ENCODE measurements at regions of chr14 and their contacts with region 1.

Region 1: DNA sequence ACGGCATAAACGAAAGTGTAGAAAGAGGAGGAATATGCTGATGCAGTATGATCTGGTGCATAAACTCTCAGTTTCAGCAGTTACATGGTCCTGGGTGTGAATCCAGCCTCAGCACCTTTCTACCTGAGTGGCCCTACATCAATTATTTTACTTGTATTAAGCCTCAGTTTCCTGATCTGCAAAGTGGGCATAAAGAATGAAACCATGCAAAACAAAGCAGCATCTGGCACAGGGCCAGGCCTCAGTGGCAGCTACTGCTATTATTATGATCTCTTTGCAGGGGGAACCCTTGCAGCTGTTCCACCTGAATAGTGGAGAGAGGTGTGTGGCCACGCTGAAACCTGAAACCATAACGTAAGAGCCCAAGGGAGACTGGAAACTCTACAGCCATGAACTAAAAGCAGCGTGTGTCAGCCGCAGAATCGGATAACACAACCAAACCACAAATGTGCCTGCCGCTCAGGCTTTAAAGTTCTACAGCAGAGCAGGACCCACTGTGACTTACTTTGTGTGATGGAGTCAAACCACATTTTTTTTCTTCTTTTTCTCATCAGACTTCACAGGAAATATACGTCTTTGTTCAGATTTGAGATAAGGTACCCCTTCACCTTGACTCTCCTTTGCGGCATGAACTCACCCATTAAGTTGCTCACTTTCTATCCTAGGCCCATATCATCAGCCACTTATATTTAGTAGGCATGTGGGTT is 29.2 kb upstream of the FOS start:
- DNase-seq: peak; percentile 86
- H3K4me3 Mint-ChIP-seq: peak overlapping the region; percentile 48
- H3K27ac Mint-ChIP-seq: peak overlapping the region; percentile 85
- H3K4me1 Mint-ChIP-seq: peaks cover 54% of the 10 kb centered on the region
- H3K27me3 Mint-ChIP-seq: peaks cover 39% of the 10 kb centered on the region

Region 2: GRCh38 chr14:74754157-74754556 is 495.2 kb before region 1 on chr14:
- intact Hi-C with region 1: no loop called
- DNase-seq: no peak
- H3K4me3 Mint-ChIP-seq: no peak overlapping the region
- H3K27ac Mint-ChIP-seq: no peak overlapping the region
- H3K4me1 Mint-ChIP-seq: no peaks in the 10 kb centered on the region
- H3K27me3 Mint-ChIP-seq: no peaks in the 10 kb centered on the region

Region 3: GRCh38 chr14:75132382-75133086 is 116.9 kb before region 1 on chr14:
- intact Hi-C with region 1: loop called (anchors 1 kb)
- DNase-seq: peak; percentile 47
- H3K4me3 Mint-ChIP-seq: no peak overlapping the region
- H3K27ac Mint-ChIP-seq: peak overlapping the region; percentile 4
- H3K4me1 Mint-ChIP-seq: peaks cover 20% of the 10 kb centered on the region
- H3K27me3 Mint-ChIP-seq: no peaks in the 10 kb centered on the region

Region 4: GRCh38 chr14:75165586-75166391 is 83.6 kb before region 1 on chr14:
- intact Hi-C with region 1: no loop called
- DNase-seq: no peak
- H3K4me3 Mint-ChIP-seq: no peak overlapping the region
- H3K27ac Mint-ChIP-seq: no peak overlapping the region
- H3K4me1 Mint-ChIP-seq: peaks cover 21% of the 10 kb centered on the region
- H3K27me3 Mint-ChIP-seq: no peaks in the 10 kb centered on the region

Region 5: DNA sequence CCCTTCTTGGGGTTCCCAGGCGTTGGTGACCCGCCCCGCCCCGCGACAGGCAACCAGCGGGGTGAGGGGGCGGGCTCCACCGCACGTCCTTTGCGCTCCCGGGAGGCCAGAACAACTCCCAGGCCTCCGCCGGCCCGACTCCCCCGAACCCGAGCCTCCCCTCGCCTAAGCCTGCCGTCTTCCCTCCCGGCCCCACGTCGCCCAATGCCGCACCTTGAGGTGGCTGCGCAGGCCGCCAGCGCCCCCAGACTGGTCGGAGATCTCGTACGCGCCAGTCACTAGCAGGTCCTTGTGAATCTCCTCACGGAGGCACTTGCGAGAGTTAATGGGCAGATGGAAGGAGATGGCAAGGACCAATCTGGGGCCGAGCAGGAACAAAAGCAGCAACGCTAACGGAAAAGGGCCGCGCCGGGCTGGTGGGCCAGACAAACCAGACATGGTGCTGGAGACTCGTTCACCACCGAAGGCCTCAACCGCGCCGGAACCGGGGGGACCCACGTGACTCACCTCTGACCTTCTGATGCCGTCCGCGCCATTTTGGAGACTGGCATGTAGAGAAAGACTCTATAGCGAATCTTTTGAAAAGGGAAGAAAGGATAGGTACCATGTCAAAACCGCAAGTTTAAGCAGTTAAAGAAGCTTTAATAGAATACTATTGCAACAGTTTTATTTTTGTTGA is 73.1 kb before region 1 on chr14 and contains the start of gene TMED10:
- intact Hi-C with region 1: loop called (anchors 1 kb)
- DNase-seq: peak; percentile 87
- H3K4me3 Mint-ChIP-seq: peak within 1 kb of the TSS; percentile 89
- H3K27ac Mint-ChIP-seq: peak within 1 kb of the TSS; percentile 96
- H3K4me1 Mint-ChIP-seq: peaks cover 35% of the 10 kb centered on the region
- H3K27me3 Mint-ChIP-seq: peaks cover 7% of the 10 kb centered on the region
- total RNA-seq, gene TMED10: 195 and 204 TPM in 2 replicates

Region 6: GRCh38 chr14:75278422-75279161 is 29.2 kb after region 1 on chr14 and contains the start of gene FOS:
- intact Hi-C with region 1: loop called (anchors 1 kb)
- DNase-seq: peak; percentile 87
- H3K4me3 Mint-ChIP-seq: peak within 1 kb of the TSS; percentile 90
- H3K27ac Mint-ChIP-seq: peak within 1 kb of the TSS; percentile 99
- H3K4me1 Mint-ChIP-seq: peaks cover 52% of the 10 kb centered on the region
- H3K27me3 Mint-ChIP-seq: peaks cover 55% of the 10 kb centered on the region
- total RNA-seq, gene FOS: 40.9 and 41.9 TPM in 2 replicates

Region 7: DNA sequence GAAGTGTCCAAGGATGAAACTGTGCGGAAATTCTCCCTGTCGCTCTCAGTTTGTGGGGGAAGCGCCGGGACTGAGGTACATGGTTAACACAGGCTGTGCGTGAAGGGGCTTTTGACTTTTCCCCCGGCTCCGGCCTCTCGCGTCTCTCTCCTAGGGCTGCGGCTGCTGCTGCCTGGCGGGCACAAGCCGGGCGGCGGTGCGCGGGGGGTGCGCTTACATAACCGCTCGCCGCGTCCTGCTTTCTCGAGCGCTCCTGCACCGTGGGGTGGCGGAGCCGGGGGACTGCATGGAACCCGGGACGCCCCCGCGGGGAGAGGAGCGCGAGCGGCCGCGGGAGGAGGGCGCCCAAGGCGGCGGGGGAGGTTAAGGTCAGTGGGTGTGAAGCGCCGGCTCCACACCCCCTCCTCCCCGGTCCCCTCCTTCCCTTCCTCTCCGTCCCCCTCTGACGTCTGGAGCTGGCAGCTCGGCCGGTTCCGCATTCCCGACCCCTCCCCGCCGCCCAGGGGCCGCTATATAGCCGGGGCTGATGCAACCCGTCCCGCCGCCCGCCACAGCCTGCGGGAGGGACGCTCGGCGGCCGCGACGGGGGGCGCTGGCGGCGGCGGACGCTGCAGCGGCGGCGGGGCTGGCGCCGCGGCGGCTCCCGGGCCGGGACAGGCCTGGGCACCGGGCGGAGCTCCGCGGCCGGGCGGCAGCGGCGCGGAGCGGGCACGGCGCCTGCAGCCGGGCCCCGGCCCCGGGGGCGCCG is 178.3 kb after region 1 on chr14 and contains the start of gene JDP2:
- intact Hi-C with region 1: no loop called
- DNase-seq: peak; percentile 33
- H3K4me3 Mint-ChIP-seq: peak within 1 kb of the TSS; percentile 81
- H3K27ac Mint-ChIP-seq: peak within 1 kb of the TSS; percentile 71
- H3K4me1 Mint-ChIP-seq: peaks cover 15% of the 10 kb centered on the region
- H3K27me3 Mint-ChIP-seq: peaks cover 17% of the 10 kb centered on the region
- total RNA-seq, gene JDP2: 1.8 and 2.0 TPM in 2 replicates

Region 8: GRCh38 chr14:75487155-75487671 is 237.8 kb after region 1 on chr14:
- intact Hi-C with region 1: loop called (anchors 5 kb)
- DNase-seq: peak; percentile 43
- H3K4me3 Mint-ChIP-seq: no peak overlapping the region
- H3K27ac Mint-ChIP-seq: peak overlapping the region; percentile 72
- H3K4me1 Mint-ChIP-seq: peaks cover 47% of the 10 kb centered on the region
- H3K27me3 Mint-ChIP-seq: no peaks in the 10 kb centered on the region